CD4-positive, alpha-beta T cell (primary cell): ENCODE measurements at regions of chr11 and their contacts with region 1.

Region 1: GRCh38 chr11:96134602-96135001 is 208.4 kb downstream of the MAML2 start:
- DNase-seq: peak in 3 of 14 experiments; percentile 57 to 67 (median 64)
- ATAC-seq: peak; percentile 63
- H3K4me3 ChIP-seq: no peak overlapping the region
- H3K4me3 Mint-ChIP-seq: no peak overlapping the region
- H3K27ac ChIP-seq: no peak overlapping the region
- H3K27ac Mint-ChIP-seq: peak overlapping the region; percentile 73
- H3K4me1 ChIP-seq: peaks cover 7% of the 10 kb centered on the region
- H3K4me1 Mint-ChIP-seq: peaks cover 87% of the 10 kb centered on the region
- H3K27me3 ChIP-seq: no peaks in the 10 kb centered on the region
- H3K27me3 Mint-ChIP-seq: no peaks in the 10 kb centered on the region
- CTCF ChIP-seq: no peak

Region 2: DNA sequence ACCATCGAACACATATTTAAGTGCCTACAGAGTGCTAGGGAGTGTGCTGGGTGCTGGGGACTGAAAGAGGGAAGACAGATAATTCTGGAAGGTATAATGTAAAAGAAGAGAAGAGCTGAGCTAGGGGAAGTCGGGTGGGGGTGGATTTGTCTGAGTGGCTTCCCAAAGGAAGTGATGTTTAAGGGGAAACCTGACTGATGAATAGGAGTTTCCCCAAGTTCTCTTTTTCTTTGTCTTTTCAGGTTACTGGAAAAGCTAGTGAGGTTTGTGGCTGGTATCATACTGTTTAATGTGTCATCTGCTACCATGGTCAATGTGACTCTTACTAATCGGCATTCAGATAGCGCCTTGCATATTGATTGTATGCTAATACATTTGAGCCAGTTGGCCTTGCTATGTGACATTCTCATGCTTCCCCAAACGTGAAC is 59.1 kb before region 1 on chr11:
- CTCF ChIA-PET with region 1: no interaction called
- POLR2A ChIA-PET with region 1: no interaction called
- intact Hi-C with region 1: loop called in 1 of 2 experiments (anchors 5 kb)
- DNase-seq: peak in 2 of 14 experiments; percentile 31 to 51
- ATAC-seq: no peak
- H3K4me3 ChIP-seq: no peak overlapping the region
- H3K4me3 Mint-ChIP-seq: peak overlapping the region; percentile 11
- H3K27ac ChIP-seq: no peak overlapping the region
- H3K27ac Mint-ChIP-seq: peak overlapping the region; percentile 65
- H3K4me1 ChIP-seq: peaks cover 12% of the 10 kb centered on the region
- H3K4me1 Mint-ChIP-seq: peaks cover 68% of the 10 kb centered on the region
- H3K27me3 ChIP-seq: no peaks in the 10 kb centered on the region
- H3K27me3 Mint-ChIP-seq: no peaks in the 10 kb centered on the region
- CTCF ChIP-seq: no peak